Panc1 (cell line): ENCODE measurements at regions of chr13 and their contacts with region 1.

Region 1: DNA sequence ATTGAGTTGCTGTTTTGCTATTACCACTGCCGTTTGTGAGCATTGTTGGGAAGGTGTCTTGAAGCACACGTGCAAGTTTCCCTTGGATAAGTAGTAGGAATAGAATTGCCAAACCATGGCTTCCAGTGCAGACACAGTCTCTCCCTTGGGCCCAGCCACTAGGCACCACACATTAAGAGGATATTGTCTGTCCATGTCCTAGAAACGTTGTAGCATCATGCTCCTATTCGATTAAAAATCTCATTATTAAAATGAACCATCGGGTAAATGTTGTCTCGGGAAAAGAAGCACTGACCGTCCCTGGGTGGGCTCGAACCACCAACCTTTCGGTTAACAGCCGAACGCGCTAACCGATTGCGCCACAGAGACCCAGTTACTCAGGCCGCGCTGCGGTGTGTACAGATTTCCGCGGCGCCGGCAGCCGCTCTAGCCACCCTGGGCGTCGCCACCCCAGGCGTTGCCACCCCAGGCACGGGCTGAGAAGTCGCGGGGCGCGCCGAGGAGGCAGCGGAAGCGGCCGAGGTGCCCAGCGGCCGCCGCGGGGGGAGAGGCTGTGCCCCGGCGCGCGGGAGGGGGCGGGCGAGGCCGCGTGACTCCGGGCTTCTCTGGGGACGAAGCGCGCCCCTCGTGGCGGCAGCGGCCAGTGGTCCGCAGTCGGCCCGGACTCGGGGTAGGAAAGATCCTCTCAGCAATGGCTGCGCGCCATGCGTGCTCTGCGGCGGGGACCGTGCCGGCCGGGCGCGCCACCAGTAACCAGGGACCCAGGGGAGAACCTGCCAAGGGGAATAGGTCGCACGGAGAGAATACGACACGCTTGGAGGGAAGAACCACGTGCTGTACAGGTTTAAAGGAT is 56.2 kb downstream of the USPL1 start:
- DNase-seq: peak; percentile 68
- ATAC-seq: peak; percentile 97
- H3K4me3 ChIP-seq: peak overlapping the region; percentile 31 to 43
- H3K27ac ChIP-seq: peak overlapping the region; percentile 82
- H3K4me1 ChIP-seq: no peaks in the 10 kb centered on the region; the same call in 1 of the 2 replicates
- H3K27me3 ChIP-seq: no peaks in the 10 kb centered on the region
- CTCF ChIP-seq: peak; percentile 79

Region 2: GRCh38 chr13:30416471-30416870 is 257.4 kb before region 1 on chr13:
- CTCF ChIA-PET with region 1: interaction called, 11 read pairs
- POLR2A ChIA-PET with region 1: no interaction called
- in situ Hi-C with region 1: no loop called
- intact Hi-C with region 1: no loop called
- DNase-seq: no peak
- ATAC-seq: no peak
- H3K4me3 ChIP-seq: no peak overlapping the region
- H3K27ac ChIP-seq: no peak overlapping the region
- H3K4me1 ChIP-seq: peaks cover 5% of the 10 kb centered on the region
- H3K27me3 ChIP-seq: no peaks in the 10 kb centered on the region
- CTCF ChIP-seq: no peak

Region 3: GRCh38 chr13:30639671-30640070 is 34.2 kb before region 1 on chr13:
- CTCF ChIA-PET with region 1: no interaction called
- POLR2A ChIA-PET with region 1: no interaction called
- in situ Hi-C with region 1: no loop called
- intact Hi-C with region 1: no loop called
- DNase-seq: no peak
- ATAC-seq: no peak
- H3K4me3 ChIP-seq: no peak overlapping the region
- H3K27ac ChIP-seq: no peak overlapping the region
- H3K4me1 ChIP-seq: no peaks in the 10 kb centered on the region
- H3K27me3 ChIP-seq: no peaks in the 10 kb centered on the region
- CTCF ChIP-seq: no peak

Region 4: DNA sequence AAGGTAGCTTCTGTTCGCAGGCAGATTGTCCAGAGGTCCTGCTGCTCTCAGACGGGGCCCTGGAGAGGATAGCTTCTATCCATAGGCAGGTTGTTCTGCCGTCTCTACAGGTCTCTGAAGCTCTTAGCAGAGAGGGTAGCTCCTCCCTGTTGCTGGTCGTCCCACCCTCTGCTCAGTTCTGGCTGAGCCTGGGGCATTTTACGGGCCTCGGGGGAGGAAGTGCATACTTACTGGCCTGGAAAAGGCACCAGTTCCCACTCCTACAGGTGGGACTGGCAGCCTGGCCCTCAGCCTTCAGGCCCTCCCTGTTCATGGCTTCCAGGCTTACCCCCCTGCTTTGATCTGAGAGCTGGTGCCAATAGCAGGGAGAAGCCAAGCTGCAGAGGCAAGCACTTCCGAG is 13.9 kb before region 1 on chr13:
- CTCF ChIA-PET with region 1: no interaction called
- POLR2A ChIA-PET with region 1: interaction called, 16 read pairs
- in situ Hi-C with region 1: no loop called
- intact Hi-C with region 1: no loop called
- DNase-seq: no peak
- ATAC-seq: peak; percentile 72
- H3K4me3 ChIP-seq: no peak overlapping the region
- H3K27ac ChIP-seq: no peak overlapping the region
- H3K4me1 ChIP-seq: 0 out of 2 replicates have a peak, but pooled peaks cover 8% of the 10 kb centered on the region
- H3K27me3 ChIP-seq: no peaks in the 10 kb centered on the region
- CTCF ChIP-seq: no peak

Region 5: DNA sequence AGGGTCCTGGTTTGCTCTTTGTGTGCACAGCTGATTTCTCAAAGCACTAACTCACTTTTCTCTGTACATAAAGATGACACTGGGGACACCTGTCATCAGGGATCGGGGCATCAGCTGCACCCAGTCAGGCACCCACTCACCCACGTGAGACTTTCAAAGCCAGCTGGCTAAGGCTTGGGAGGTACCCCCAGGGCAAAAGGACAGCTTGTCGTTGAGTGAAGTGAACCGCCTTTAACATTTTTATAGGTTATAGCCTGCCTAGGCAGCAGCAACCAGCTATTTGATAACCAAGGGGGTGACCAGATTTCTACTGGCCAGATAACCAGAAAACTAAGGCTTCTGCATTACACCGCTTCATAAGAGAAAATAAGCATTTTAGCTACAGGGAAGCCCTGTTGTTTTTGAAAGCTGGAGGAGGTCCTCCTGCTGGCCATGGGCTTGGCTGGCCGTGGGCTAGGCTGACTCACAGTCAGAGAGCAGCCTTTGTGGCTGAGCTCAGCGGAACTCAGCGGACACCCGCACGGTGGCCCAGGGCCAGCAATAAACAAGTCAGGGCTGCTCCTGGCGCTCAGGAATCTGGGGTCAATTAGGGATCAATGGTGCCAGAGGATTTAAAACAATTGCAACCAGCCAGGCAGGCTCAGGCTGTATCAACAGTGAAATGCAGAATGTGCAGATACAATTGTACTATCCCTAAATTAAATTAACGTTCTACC is 118.5 kb after region 1 on chr13:
- CTCF ChIA-PET with region 1: interaction called, 12 read pairs
- POLR2A ChIA-PET with region 1: interaction called, 9 read pairs
- in situ Hi-C with region 1: no loop called
- intact Hi-C with region 1: no loop called
- DNase-seq: no peak
- ATAC-seq: peak; percentile 89
- H3K4me3 ChIP-seq: 0 out of 4 replicates have a peak overlapping the region, but pooled peaks of 1 of the 2 experiments have one; percentile 14
- H3K27ac ChIP-seq: peak overlapping the region; percentile 92
- H3K4me1 ChIP-seq: peaks cover 48% of the 10 kb centered on the region
- H3K27me3 ChIP-seq: no peaks in the 10 kb centered on the region
- CTCF ChIP-seq: no peak